GM10248 (cell line): ENCODE measurements at regions of chr1 and their contacts with region 1.

Region 1: GRCh38 chr1:91929250-91929649 is 20.0 kb upstream of the BRDT start:
- DNase-seq: no peak
- CTCF ChIP-seq: no peak

Region 2: GRCh38 chr1:91673613-91674012 is 255.6 kb before region 1 on chr1:
- CTCF ChIA-PET with region 1: no interaction called
- POLR2A ChIA-PET with region 1: no interaction called
- DNase-seq: no peak
- CTCF ChIP-seq: no peak

Region 3: GRCh38 chr1:91853397-91853796 is 75.9 kb before region 1 on chr1:
- CTCF ChIA-PET with region 1: no interaction called
- POLR2A ChIA-PET with region 1: no interaction called
- DNase-seq: no peak
- CTCF ChIP-seq: no peak

Region 4: DNA sequence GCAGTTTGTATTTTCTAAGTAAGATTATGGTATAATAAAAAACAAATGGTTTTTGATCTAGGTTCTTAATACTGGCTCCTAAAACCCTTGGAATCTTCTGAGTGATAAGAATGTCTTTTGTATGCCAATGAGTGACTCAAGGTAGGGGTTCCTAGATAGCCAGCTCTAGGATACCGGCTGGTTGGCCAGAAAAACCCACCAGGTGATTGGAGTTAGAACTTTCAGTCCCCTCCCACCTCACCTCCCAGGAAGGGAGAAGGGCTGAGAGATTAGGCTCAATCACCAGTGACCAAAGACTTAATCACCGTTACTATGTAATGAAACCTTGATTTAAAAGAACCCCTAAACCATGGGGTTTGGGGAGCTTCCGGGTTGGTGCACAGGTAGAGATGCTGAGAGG is 11.2 kb after region 1 on chr1:
- CTCF ChIA-PET with region 1: interaction called, 16 read pairs
- POLR2A ChIA-PET with region 1: no interaction called
- DNase-seq: no peak
- CTCF ChIP-seq: no peak